Activated T-helper 1 cell treated with anti-CD3 and anti-CD28 coated beads, Interleukin-12 subunit alpha, Interleukin-12 subunit beta, Interleukin-2, Interleukin-4 antibody, amounts not matched to agents 30 ng/mL and 10 ng/mL and 1 ng/mL, durations not matched to agents 14 hours and 24 hours and 36 hours (primary cell): ENCODE measurements at regions of chr10 and their contacts with region 1.

Region 1: DNA sequence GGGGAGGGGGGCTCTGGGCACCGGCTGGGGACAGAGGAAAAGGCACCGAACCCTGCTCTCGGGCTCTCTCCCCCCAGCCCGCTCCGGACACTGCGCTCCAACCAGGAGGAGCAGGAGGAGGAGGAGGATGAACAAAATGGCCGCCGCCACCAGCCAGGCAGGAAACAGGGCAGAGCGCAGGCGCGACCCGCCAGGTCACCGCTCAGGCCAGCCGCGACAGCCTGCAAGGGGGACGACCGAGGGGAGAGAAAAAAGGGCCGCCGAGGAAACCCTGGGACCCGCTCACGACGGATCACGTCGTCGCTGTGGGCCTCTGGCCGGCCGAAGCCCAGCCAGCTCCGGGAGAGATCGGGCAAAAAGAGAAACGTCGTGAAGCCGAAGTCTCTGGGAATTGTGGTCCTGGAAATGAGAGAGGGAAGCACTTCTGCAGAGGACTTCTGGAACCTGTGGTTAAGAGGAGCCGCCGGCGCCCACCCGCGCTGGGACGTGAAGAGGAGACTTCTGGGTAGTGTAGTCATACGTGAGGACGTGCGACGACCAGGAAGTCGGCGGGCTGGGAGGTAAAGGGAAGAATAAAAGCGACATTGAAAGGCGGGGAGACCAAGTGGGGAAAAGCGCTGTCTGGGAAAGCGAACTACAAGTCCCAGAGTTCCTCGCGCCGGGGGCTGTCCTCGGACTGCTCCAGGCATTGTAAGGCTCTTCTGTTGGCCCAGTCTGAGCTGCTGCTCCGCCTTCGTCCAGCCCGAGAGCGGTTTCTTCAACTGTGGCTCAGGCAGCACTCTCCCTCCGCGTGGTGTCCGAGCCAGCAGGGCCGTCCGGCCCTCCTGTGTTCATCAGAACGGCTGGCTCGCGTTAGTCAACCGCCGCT is at the start of gene TIAL1:
- DNase-seq: peak; percentile 92
- H3K4me3 Mint-ChIP-seq: peak within 1 kb of the TSS; percentile 91
- H3K27ac Mint-ChIP-seq: peak within 1 kb of the TSS; percentile 98
- H3K4me1 Mint-ChIP-seq: peaks cover 51% of the 10 kb centered on the region
- H3K27me3 Mint-ChIP-seq: no peaks in the 10 kb centered on the region
- total RNA-seq, gene TIAL1: 192 and 195 TPM in 2 replicates

Region 2: DNA sequence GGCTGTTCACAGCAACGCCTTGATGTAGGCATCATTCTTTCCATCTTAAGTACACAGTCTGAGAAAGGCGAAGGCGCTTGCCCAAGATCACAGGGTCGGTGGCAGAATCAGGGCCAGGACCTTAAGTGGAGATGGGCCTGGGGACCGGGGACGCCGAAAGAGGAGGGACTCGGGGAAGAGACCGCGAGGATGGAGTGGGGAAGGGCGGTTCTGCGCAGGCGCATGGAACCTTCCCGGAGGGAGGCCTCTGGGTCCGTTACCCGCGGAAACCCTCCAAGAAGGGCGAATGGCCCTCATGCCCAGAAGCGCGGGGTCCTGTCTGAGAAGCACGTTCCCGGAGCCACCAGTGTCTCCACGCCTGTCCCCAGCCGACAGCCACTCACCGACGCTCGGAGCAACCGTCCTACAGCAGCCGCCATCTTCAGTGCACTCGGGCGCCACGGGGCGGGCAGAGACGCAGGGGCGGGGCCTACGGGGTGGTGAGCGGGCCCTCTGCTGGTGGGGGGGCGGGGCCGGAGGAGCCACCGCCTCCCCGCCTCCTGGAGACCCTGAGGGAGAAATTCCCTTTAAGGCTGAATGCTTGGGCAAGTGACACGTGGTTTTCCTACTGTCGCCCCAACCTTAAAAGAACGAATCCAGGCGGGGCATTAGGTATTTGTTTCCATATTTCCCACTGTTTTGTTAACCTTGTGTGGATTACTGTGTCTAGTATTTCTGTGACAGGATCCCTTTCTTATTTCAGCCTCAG is 418.2 kb before region 1 on chr10 and contains the start of gene PRDX3:
- intact Hi-C with region 1: loop called (anchors 2 kb)
- DNase-seq: peak; percentile 89
- H3K4me3 Mint-ChIP-seq: peak within 1 kb of the TSS; percentile 100
- H3K27ac Mint-ChIP-seq: peak within 1 kb of the TSS; percentile 100
- H3K4me1 Mint-ChIP-seq: peaks cover 30% of the 10 kb centered on the region
- H3K27me3 Mint-ChIP-seq: no peaks in the 10 kb centered on the region
- total RNA-seq, gene PRDX3: 158 and 163 TPM in 2 replicates

Region 3: GRCh38 chr10:119246862-119247549 is 349.8 kb before region 1 on chr10:
- intact Hi-C with region 1: no loop called
- DNase-seq: no peak
- H3K4me3 Mint-ChIP-seq: no peak overlapping the region
- H3K27ac Mint-ChIP-seq: no peak overlapping the region
- H3K4me1 Mint-ChIP-seq: peaks cover 45% of the 10 kb centered on the region
- H3K27me3 Mint-ChIP-seq: no peaks in the 10 kb centered on the region

Region 4: DNA sequence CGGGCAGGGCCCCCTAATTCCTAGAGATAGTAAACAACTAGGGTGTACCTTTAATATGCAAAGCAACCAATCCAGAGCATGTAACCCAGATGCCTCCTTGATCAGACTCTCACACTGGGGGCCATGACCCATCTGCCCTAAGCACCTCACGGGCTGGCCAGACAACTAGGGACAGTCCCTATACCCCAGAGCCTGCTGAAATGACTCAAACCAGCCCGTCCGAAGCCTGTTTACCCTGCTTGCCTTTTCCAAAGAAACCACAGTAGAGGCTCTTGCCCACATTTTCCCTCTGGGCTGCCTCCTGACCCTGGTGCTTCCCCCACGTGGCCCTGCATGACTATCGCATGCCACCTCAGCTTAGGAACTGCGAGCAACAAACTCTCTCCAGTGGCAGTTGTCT is 100.5 kb before region 1 on chr10:
- intact Hi-C with region 1: loop called (anchors 5 kb)
- DNase-seq: no peak
- H3K4me3 Mint-ChIP-seq: peak overlapping the region; percentile 64
- H3K27ac Mint-ChIP-seq: peak overlapping the region; percentile 87
- H3K4me1 Mint-ChIP-seq: peaks cover 79% of the 10 kb centered on the region
- H3K27me3 Mint-ChIP-seq: no peaks in the 10 kb centered on the region

Region 5: GRCh38 chr10:119650692-119651513 is 54.1 kb after region 1 on chr10 and contains the start of gene BAG3:
- intact Hi-C with region 1: loop called (anchors 1 kb)
- DNase-seq: peak; percentile 70
- H3K4me3 Mint-ChIP-seq: peak within 1 kb of the TSS; percentile 95
- H3K27ac Mint-ChIP-seq: peak within 1 kb of the TSS; percentile 96
- H3K4me1 Mint-ChIP-seq: peaks cover 50% of the 10 kb centered on the region
- H3K27me3 Mint-ChIP-seq: no peaks in the 10 kb centered on the region
- total RNA-seq, gene BAG3: 30.4 and 30.5 TPM in 2 replicates

Region 6: DNA sequence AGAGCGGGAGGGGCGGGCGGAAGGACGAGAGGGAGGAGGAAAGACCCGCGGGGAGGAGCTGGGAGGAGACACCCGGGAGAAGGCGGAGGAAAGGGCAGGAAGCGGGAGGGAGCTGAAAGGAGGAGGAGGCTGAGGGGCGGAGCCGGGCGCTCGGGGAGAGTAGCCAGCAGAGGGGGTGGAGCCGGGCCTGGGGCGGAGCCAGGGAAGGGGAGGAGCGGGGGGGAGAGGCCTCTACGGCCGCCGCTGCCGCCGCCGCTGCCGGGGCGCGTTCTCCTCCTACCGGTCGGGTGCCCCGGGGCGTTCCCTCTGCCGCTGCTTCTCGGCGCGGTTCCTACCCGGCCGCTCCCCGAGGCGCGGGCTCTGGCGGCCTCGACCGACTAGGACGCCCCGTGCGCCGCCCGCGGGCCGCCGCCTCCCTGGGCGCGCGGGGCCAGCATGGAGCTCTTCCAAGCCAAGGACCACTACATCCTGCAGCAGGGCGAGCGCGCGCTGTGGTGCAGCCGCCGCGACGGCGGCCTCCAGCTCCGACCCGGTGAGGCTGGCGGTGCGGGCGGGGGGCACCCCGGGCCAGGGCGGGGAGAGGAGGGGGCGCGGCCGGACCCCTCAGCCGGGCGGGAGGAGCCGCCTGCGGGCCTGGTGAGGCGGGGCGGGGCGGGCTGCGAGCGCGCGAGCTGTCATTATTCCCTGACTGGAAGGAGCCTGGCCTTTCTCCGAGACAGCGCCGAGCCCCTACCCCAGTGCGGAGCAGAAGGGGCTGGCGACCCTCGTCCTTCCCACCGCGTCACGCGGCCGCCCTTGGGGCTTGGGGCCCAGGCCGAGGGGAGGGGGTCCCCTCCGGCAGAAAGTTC is 129.3 kb after region 1 on chr10 and contains the start of gene INPP5F:
- intact Hi-C with region 1: loop called (anchors 1 kb)
- DNase-seq: peak; percentile 98
- H3K4me3 Mint-ChIP-seq: peak within 1 kb of the TSS; percentile 93
- H3K27ac Mint-ChIP-seq: peak within 1 kb of the TSS; percentile 81
- H3K4me1 Mint-ChIP-seq: peaks cover 39% of the 10 kb centered on the region
- H3K27me3 Mint-ChIP-seq: no peaks in the 10 kb centered on the region
- total RNA-seq, gene INPP5F: 17.7 and 19.4 TPM in 2 replicates

Region 7: DNA sequence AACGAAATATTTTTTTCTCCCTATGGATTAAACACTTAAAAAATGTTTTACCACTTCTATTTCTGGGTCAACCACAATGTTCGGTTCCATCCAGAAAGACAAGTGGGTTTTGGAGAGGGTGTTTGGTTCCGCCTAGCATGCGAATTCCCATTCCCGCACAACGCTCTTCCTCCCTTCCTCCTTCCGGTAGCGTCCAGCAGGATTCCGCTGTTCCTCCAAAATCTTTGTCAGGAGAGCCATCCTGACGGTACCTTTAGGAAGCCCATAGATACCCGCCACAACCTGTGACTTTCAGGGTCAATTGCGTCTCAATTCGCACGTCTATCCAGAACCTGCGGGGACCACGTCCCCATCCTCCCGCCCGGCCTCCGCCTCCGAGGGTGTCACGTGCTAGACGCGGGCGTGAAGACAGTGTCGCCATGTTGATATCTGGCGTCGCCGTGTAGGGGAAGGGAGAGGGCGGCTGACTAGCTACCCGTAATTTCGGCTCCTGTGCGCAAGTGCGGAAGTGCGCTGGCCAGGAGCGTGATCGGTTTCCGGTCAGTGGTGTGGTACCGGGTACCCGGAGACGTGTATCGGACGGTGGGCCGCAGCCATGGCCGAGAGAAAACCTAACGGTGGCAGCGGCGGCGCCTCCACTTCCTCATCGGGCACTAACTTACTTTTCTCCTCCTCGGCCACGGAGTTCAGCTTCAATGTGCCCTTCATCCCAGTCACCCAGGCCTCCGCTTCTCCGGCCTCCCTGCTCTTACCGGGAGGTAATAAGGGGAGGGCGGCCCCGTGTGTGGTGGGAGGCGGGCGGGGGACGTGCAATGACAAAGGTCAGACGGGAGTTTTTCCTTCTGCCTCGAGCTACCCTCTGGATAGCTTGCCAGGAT is 295.7 kb after region 1 on chr10 and contains the start of gene SEC23IP:
- intact Hi-C with region 1: loop called (anchors 2 kb)
- DNase-seq: peak; percentile 92
- H3K4me3 Mint-ChIP-seq: peak within 1 kb of the TSS; percentile 92
- H3K27ac Mint-ChIP-seq: peak within 1 kb of the TSS; percentile 96
- H3K4me1 Mint-ChIP-seq: peaks cover 53% of the 10 kb centered on the region
- H3K27me3 Mint-ChIP-seq: peaks cover 4% of the 10 kb centered on the region
- total RNA-seq, gene SEC23IP: 79.7 and 91.7 TPM in 2 replicates